ENCODE measurements at regions of chr5 and their contacts with region 1.

Region 1: GRCh38 chr5:76641514-76642120 is 18.4 kb upstream of the F2RL2 start:
- DNase-seq: peak; percentile 82 to 92 (median 87)
- H3K4me3 ChIP-seq: no peak overlapping the region
- H3K27ac ChIP-seq: no peak overlapping the region
- H3K4me1 ChIP-seq: peaks cover 2 to 11% (median 7%) of the 10 kb centered on the region in 4 experiments
- H3K27me3 ChIP-seq: no peaks in the 10 kb centered on the region

Region 2: DNA sequence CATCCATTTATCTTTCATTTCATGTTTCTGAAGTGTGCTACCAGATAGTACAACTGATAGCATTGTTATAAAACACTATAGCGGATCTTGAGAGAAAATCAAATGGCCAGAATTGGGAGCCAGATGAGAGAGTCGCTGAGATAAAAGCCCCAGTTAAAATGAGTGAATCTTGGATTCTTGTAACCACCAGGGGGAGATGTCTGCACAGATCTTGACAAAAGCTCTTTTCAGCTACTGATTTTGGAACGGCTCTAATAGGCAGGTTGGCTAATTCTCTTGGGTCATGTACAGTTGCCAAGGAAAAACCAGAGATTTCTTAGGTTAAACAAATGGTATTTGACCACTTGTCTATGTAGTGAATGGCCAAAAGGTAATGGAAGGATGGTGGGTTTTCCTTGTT is 40.1 kb before region 1 on chr5:
- CTCF ChIA-PET with region 1: interaction called, 48 read pairs
- POLR2A ChIA-PET with region 1: no interaction called
- DNase-seq: peak; percentile 68 to 81 (median 80)
- H3K4me3 ChIP-seq: no peak overlapping the region
- H3K27ac ChIP-seq: no peak overlapping the region
- H3K4me1 ChIP-seq: peaks cover 0 to 2% (median 0%) of the 10 kb centered on the region in 4 experiments
- H3K27me3 ChIP-seq: no peaks in the 10 kb centered on the region

Region 3: DNA sequence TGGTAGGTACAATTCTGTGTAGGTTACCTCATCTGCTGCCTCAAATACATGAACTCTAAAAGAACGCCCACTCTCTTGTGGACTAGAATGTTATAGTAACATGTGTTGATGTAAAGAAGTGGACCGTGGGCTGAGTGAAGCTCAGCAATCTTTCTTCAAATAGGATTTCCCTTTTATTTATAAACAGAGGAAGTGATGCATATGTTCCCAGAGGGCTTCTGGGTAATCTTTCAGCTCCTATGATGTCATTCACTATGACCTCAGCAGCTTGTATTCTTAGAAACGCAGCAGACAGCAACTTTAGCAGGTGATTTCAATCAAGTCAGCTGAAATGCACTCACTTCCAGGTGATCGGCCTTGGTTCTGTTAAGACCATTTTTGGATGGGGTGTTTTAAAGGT is 32.8 kb before region 1 on chr5:
- CTCF ChIA-PET with region 1: interaction called, 48 read pairs
- POLR2A ChIA-PET with region 1: no interaction called
- DNase-seq: peak; percentile 39 to 65 (median 60)
- H3K4me3 ChIP-seq: no peak overlapping the region
- H3K27ac ChIP-seq: peak overlapping the region in 1 of 2 experiments; percentile 47
- H3K4me1 ChIP-seq: peaks cover 0 to 20% (median 5%) of the 10 kb centered on the region in 4 experiments
- H3K27me3 ChIP-seq: no peaks in the 10 kb centered on the region

Region 4: DNA sequence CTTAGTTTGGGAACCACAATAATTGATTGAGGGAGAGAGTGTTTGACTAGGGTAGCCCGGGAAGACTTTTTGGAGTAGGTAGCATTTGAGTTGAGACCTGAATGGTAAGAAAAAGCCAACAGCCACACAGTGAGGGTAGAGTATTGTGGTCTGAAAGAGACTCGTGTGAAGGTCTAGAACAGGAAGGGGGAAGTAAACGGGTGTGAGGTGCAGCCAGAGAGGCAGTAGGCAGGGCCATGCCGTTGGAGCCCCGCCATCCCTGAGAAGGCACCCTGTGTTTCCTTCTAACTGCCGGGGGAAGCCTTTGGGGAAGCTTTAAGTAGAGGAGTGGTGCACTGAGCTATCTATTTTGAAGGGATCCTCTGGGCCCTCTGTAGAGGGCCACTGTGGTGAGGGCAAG is 14.9 kb before region 1 on chr5:
- CTCF ChIA-PET with region 1: interaction called, 24 read pairs
- POLR2A ChIA-PET with region 1: interaction called, 4 read pairs
- DNase-seq: peak; percentile 37 to 91 (median 85)
- H3K4me3 ChIP-seq: peak overlapping the region in 3 of 7 experiments; percentile 5 to 36 (median 20)
- H3K27ac ChIP-seq: peak overlapping the region in 1 of 2 experiments; percentile 38
- H3K4me1 ChIP-seq: peaks cover 11 to 58% (median 32%) of the 10 kb centered on the region in 4 experiments
- H3K27me3 ChIP-seq: no peaks in the 10 kb centered on the region

Region 5: DNA sequence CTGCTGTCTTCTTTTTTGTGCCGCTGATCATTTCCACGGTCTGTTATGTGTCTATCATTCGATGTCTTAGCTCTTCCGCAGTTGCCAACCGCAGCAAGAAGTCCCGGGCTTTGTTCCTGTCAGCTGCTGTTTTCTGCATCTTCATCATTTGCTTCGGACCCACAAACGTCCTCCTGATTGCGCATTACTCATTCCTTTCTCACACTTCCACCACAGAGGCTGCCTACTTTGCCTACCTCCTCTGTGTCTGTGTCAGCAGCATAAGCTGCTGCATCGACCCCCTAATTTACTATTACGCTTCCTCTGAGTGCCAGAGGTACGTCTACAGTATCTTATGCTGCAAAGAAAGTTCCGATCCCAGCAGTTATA is 91.4 kb after region 1 on chr5:
- CTCF ChIA-PET with region 1: no interaction called
- POLR2A ChIA-PET with region 1: no interaction called
- DNase-seq: no peak
- H3K4me3 ChIP-seq: no peak overlapping the region
- H3K27ac ChIP-seq: no peak overlapping the region
- H3K4me1 ChIP-seq: peaks cover 6 to 22% (median 14%) of the 10 kb centered on the region in 4 experiments
- H3K27me3 ChIP-seq: no peaks in the 10 kb centered on the region

Region 6: GRCh38 chr5:77015938-77016569 is 374.4 kb after region 1 on chr5:
- CTCF ChIA-PET with region 1: no interaction called
- POLR2A ChIA-PET with region 1: no interaction called
- DNase-seq: peak; percentile 83 to 90 (median 88)
- H3K4me3 ChIP-seq: no peak overlapping the region
- H3K27ac ChIP-seq: no peak overlapping the region
- H3K4me1 ChIP-seq: no peaks in the 10 kb centered on the region
- H3K27me3 ChIP-seq: no peaks in the 10 kb centered on the region